ENCODE measurements at regions of chr17 and their contacts with region 1.

Region 1: GRCh38 chr17:40499551-40500174 is 1.8 kb downstream of the TNS4 start:
- DNase-seq: peak; percentile 71
- H3K4me3 ChIP-seq: peak overlapping the region; percentile 69 to 98 (median 77)
- H3K27ac ChIP-seq: peak overlapping the region; percentile 96
- H3K4me1 ChIP-seq: peaks cover 37% of the 10 kb centered on the region
- H3K27me3 ChIP-seq: no peaks in the 10 kb centered on the region
- CTCF ChIP-seq: peak in 1 of 2 donors; percentile 16

Region 2: GRCh38 chr17:40443583-40444327 is 55.9 kb before region 1 on chr17:
- CTCF ChIA-PET with region 1: no interaction called
- dilution Hi-C with region 1: no loop called
- in situ Hi-C with region 1: no loop called
- intact Hi-C with region 1: loop called (anchors 1 kb)
- DNase-seq: peak; percentile 55
- H3K4me3 ChIP-seq: peak overlapping the region; percentile 25 to 60 (median 45)
- H3K27ac ChIP-seq: peak overlapping the region; percentile 0
- H3K4me1 ChIP-seq: peaks cover 34% of the 10 kb centered on the region
- H3K27me3 ChIP-seq: no peaks in the 10 kb centered on the region
- CTCF ChIP-seq: peak; percentile 41 to 68

Region 3: GRCh38 chr17:40480501-40481003 is 19.1 kb before region 1 on chr17:
- CTCF ChIA-PET with region 1: no interaction called
- dilution Hi-C with region 1: no loop called
- in situ Hi-C with region 1: no loop called
- intact Hi-C with region 1: loop called (anchors 1 kb)
- DNase-seq: peak; percentile 63
- H3K4me3 ChIP-seq: no peak overlapping the region
- H3K27ac ChIP-seq: peak overlapping the region; percentile 4
- H3K4me1 ChIP-seq: peaks cover 37% of the 10 kb centered on the region
- H3K27me3 ChIP-seq: no peaks in the 10 kb centered on the region
- CTCF ChIP-seq: no peak

Region 4: DNA sequence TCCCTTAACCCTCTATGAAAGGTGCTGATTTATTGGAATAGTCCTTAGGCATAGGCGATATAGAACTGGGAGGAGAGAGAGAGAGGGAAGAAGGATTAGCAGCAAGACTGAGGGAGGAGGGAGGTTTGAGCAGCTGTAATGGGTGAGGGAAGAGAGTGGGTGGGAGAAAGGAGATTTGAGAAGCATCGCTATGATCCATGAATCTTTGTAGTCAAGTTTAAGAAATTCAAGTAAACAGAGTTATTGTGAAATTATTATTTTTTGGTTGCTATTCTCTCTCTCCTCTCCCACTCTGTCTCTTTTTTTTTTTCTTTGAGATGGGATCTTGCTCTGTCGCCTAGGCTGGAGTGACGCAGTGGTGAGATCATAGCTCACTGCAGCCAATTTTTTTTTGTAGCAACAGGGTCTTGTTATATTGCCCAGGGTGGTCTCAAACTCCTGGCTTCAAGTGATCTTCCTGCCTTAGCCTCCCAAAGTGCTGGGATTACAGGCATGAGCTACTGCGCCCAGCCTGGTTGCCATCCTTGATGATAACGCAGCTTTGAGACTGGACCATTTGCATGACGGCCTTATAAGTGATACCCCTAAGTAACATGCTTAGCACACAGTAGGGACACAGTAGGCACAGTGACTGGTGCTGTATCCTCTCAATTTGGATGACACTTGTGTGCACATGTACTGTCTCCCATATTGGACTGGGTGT is 22.7 kb after region 1 on chr17:
- CTCF ChIA-PET with region 1: no interaction called
- dilution Hi-C with region 1: no loop called
- in situ Hi-C with region 1: no loop called
- intact Hi-C with region 1: loop called (anchors 1 kb)
- DNase-seq: no peak
- H3K4me3 ChIP-seq: no peak overlapping the region
- H3K27ac ChIP-seq: peak overlapping the region; percentile 100
- H3K4me1 ChIP-seq: peaks cover 62% of the 10 kb centered on the region
- H3K27me3 ChIP-seq: no peaks in the 10 kb centered on the region
- CTCF ChIP-seq: no peak

Region 5: DNA sequence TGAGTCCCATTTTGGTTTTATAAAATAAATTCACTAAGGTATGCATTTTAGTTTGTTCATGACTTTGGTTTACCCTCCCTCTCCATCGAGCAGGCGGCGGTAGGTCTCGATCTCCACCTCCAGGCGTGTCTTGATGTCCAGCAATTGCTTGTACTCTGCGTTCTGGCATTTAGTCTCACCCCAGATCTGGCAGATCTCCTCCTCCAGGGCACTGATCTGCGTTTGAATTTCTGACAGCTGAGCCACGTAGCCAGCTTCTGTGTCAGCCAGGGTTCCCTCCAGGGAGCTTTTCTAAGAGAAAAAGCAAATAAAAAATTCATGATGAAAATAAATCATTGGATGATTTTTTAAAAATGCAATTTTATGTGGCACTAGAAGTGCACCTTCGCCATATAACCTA is 199.7 kb after region 1 on chr17:
- CTCF ChIA-PET with region 1: no interaction called
- dilution Hi-C with region 1: no loop called
- in situ Hi-C with region 1: no loop called
- intact Hi-C with region 1: no loop called
- DNase-seq: no peak
- H3K4me3 ChIP-seq: no peak overlapping the region
- H3K27ac ChIP-seq: no peak overlapping the region
- H3K4me1 ChIP-seq: peaks cover 12% of the 10 kb centered on the region
- H3K27me3 ChIP-seq: no peaks in the 10 kb centered on the region
- CTCF ChIP-seq: no peak